Posterior vena cava (tissue), 2 donors: ENCODE measurements at regions of chr1 and their contacts with region 1.

Region 1: DNA sequence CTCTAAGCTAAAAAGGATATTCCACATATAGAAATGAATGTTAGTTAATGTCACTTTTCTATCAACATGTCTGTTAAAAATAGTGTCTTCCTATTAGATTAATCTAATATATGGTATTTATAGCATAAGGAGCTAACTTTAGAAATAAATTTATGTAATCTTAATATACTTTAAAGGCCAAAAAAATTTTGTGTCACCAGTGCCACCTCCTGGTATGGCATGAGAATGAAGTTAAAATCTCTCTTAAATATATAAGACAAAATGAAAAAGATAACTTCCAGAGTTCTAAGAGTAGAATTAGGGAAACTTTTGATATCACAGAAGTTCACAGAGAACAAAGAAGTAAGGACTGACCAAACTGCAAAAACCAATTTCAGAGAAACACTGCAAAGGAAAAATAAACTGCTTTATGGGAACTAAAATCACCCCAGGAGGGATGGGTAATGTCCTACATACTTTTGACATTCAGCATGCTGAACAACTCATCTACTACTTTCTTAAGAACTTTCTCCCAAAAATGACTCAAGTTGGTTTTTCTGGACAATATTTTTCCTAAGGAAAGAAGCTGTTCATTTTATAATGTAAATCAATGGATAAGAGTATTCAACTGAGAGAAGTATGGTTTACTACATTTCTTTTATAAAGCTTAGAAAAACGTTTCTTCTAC is 82.8 kb downstream of the TRIM33 start:
- DNase-seq: no peak

Region 2: GRCh38 chr1:114405653-114406052 is 22.6 kb before region 1 on chr1:
- intact Hi-C with region 1: loop called in 1 of 2 experiments (anchors 2 kb)
- DNase-seq: no peak